CD14-positive monocyte (primary cell): ENCODE measurements at regions of chr5 and their contacts with region 1.

Region 1: GRCh38 chr5:10353241-10354047 is at the start of gene MARCHF6:
- DNase-seq: peak; percentile 84 to 89 (median 88)
- H3K4me3 ChIP-seq: peak within 1 kb of the TSS; percentile 85 to 91 (median 89)
- H3K4me3 Mint-ChIP-seq: peak within 1 kb of the TSS; percentile 100
- H3K27ac ChIP-seq: peak within 1 kb of the TSS; percentile 98
- H3K27ac Mint-ChIP-seq: peak within 1 kb of the TSS; percentile 95 to 100 (median 98)
- H3K4me1 ChIP-seq: peaks cover 25 to 41% of the 10 kb centered on the region in 2 donors
- H3K4me1 Mint-ChIP-seq: peaks cover 33% of the 10 kb centered on the region
- H3K27me3 ChIP-seq: no peaks in the 10 kb centered on the region
- H3K27me3 Mint-ChIP-seq: peaks cover 0 to 3% (median 0%) of the 10 kb centered on the region in 3 donors
- CTCF ChIP-seq: no peak
- polyA plus RNA-seq, gene MARCHF6: 24.0 to 90.1 (median 31.0) TPM

Region 2: DNA sequence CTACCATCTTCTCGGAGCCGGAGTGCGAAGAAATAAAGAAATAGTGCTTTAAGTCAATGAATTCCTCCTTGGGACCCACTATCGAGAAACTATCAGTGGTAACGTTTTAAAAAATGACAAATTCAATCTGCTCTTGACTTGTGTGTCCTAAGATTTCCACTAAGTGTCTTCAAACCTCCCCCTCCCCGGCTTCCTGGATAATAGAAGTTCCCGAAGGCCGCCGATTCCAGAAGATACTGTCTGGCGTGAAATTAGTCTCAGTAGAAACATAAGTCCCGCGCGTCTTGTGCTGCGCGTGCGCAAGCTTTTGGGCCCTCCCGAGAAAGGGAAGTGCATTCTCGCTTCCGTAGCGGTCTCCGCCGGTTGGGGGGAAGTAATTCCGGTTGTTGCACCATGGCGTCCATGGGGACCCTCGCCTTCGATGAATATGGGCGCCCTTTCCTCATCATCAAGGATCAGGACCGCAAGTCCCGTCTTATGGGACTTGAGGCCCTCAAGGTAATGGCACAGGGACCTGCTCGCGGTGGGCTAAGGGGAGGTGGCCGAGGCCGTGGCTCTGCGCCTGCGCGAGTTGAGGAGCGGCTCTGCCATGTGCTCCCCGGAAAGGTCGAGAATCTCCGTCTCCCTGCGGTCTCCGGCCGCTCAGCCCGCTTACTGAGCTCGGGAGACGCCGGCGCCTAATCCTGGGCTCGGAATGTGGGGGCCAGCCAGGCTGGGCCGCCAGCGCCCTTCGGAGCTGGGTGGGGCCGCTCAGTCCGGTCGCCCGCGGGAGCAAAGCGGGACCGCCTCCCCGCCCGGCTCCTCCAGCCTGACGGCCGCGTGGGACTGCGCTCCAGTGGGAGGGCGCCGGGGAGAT is 103.3 kb before region 1 on chr5 and contains the start of gene CCT5:
- intact Hi-C with region 1: loop called in 1 of 2 experiments (anchors 5 kb)
- DNase-seq: peak; percentile 97 to 99 (median 98)
- H3K4me3 ChIP-seq: peak within 1 kb of the TSS; percentile 88 to 92 (median 89)
- H3K4me3 Mint-ChIP-seq: peak within 1 kb of the TSS; percentile 91 to 96
- H3K27ac ChIP-seq: peak within 1 kb of the TSS; percentile 85 to 99
- H3K27ac Mint-ChIP-seq: peak within 1 kb of the TSS; percentile 96 to 100 (median 99)
- H3K4me1 ChIP-seq: peaks cover 24 to 33% of the 10 kb centered on the region in 2 donors
- H3K4me1 Mint-ChIP-seq: peaks cover 29% of the 10 kb centered on the region
- H3K27me3 ChIP-seq: no peaks in the 10 kb centered on the region
- H3K27me3 Mint-ChIP-seq: peaks cover 0 to 5% (median 1%) of the 10 kb centered on the region in 3 donors
- CTCF ChIP-seq: no peak
- polyA plus RNA-seq, gene CCT5: 142 to 236 (median 229) TPM

Region 3: DNA sequence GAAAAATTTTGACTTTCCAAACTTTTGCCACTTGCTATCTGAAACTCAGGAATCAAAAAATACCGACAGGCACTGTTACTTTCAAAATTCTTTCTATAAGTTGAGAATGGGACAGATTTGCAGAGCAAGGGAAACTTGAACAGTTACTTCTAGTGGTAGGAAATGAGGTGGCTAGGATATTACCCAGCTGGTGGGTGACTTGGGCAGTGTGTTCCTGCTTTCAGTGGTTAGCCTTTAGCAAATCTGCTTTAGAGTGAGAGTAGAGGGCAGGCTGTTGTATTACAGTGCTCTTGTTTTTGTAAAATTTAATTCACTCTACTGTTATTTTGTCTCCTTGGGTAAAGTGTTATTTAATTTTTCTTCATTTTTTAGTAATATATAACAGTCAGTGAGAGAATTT is 48.1 kb after region 1 on chr5:
- intact Hi-C with region 1: no loop called
- DNase-seq: no peak
- H3K4me3 ChIP-seq: no peak overlapping the region
- H3K4me3 Mint-ChIP-seq: no peak overlapping the region
- H3K27ac ChIP-seq: peak overlapping the region in 1 of 2 donors; percentile 12
- H3K27ac Mint-ChIP-seq: peak overlapping the region in 3 of 7 donors; percentile 11 to 70 (median 36)
- H3K4me1 ChIP-seq: peaks cover 7 to 12% of the 10 kb centered on the region in 2 donors
- H3K4me1 Mint-ChIP-seq: peaks cover 15% of the 10 kb centered on the region
- H3K27me3 ChIP-seq: no peaks in the 10 kb centered on the region
- H3K27me3 Mint-ChIP-seq: peaks cover 0 to 2% (median 0%) of the 10 kb centered on the region in 3 donors
- CTCF ChIP-seq: no peak

Region 4: DNA sequence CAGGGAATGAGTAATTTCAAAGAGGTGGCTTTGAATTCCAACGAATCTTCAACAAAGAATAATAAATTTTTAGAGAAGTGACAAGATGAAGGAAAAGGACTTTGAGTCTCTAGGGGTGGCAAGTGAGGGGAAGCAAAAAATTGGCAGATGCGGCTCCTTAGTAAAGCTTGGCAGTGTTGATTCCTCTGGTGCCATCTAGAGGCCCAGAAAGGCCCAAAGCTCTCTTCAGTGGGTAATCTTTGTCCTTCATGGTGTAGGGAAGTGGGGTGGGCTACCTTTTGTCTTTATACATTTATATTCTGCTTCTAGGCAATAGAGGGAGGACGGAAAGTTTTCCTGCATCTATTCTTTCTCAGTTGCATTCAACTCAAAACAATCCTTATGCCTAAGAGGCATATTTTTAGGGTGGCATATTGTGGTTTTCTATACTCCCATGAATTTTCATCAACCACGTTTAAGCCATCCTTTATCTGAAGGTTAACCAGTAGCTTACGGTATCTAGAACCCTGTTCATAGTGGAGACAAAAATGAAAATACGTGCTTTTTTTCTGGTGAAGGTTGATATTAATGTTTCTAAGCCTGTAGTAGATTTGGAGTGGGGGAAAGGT is 70.8 kb after region 1 on chr5:
- intact Hi-C with region 1: loop called in 1 of 2 experiments (anchors 2 kb)
- DNase-seq: peak; percentile 34 to 50 (median 46)
- H3K4me3 ChIP-seq: no peak overlapping the region
- H3K4me3 Mint-ChIP-seq: no peak overlapping the region
- H3K27ac ChIP-seq: no peak overlapping the region
- H3K27ac Mint-ChIP-seq: peak overlapping the region in 2 of 7 donors; percentile 46 to 52
- H3K4me1 ChIP-seq: peaks cover 33 to 38% of the 10 kb centered on the region in 2 donors
- H3K4me1 Mint-ChIP-seq: peaks cover 40% of the 10 kb centered on the region
- H3K27me3 ChIP-seq: no peaks in the 10 kb centered on the region
- H3K27me3 Mint-ChIP-seq: no peaks in the 10 kb centered on the region
- CTCF ChIP-seq: peak; percentile 64

Region 5: DNA sequence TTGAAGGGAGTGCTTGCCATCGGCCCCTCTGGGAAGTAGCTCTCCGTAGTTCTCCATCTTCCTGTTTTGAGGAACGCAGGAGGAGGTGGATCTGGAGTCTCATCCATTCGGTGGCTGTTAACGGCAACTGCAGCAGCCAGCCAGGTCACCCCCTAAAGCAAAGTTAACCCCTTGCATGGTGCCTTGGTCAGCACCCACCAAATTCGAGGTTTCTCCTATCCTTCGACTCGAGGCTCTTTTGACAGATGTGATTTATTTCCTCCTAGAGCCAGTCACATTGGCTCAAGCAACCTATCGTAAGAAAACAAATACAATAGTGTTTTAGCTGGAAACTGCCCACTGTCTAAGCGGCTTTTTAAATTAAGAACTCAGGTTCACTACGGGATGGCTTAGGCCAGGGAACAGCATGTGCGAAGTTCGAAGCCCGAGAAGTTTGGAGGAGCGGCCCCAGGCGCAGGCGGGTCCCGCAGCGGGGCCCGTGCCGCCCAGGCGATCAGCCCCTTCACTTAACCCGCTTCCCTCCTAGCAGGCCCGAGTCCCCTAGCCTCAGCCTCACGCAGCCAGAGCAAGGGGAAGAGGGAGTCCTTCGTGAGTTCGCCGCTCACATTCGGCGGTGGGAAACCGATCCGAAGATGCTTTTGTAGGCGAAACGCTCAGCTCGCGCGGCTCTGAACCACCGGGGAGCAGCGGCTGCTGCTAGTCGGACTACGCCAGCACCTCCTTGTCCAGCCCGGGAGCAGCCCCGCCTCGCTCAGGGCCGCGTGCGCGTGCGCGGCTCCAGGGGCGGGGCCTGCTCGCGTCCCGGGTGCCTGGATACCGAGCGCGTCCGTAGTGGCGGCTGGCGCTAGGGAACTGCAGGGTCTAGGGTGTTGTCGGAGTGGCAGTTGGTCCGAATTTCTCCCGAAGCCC is 87.9 kb after region 1 on chr5 and contains the start of gene ROPN1L:
- intact Hi-C with region 1: loop called in 1 of 2 experiments (anchors 5 kb)
- DNase-seq: peak; percentile 76 to 83 (median 79)
- H3K4me3 ChIP-seq: peak within 1 kb of the TSS; percentile 51 to 87 (median 65)
- H3K4me3 Mint-ChIP-seq: peak within 1 kb of the TSS; percentile 88 to 92
- H3K27ac ChIP-seq: peak within 1 kb of the TSS; percentile 29 to 60
- H3K27ac Mint-ChIP-seq: peak within 1 kb of the TSS; percentile 70 to 91 (median 87)
- H3K4me1 ChIP-seq: peaks cover 57 to 74% of the 10 kb centered on the region in 2 donors
- H3K4me1 Mint-ChIP-seq: peaks cover 59% of the 10 kb centered on the region
- H3K27me3 ChIP-seq: no peaks in the 10 kb centered on the region
- H3K27me3 Mint-ChIP-seq: peaks cover 0 to 3% (median 0%) of the 10 kb centered on the region in 3 donors
- CTCF ChIP-seq: no peak
- polyA plus RNA-seq, gene ROPN1L: 1.5 to 2.1 (median 1.9) TPM

Region 6: GRCh38 chr5:10635257-10635866 is 281.9 kb after region 1 on chr5:
- intact Hi-C with region 1: loop called in 1 of 2 experiments (anchors 10 kb)
- DNase-seq: peak; percentile 93 to 97 (median 97)
- H3K4me3 ChIP-seq: peak overlapping the region in 1 of 3 experiments; percentile 38
- H3K4me3 Mint-ChIP-seq: peak overlapping the region; percentile 7 to 57
- H3K27ac ChIP-seq: peak overlapping the region; percentile 38 to 98
- H3K27ac Mint-ChIP-seq: peak overlapping the region; percentile 81 to 99 (median 87)
- H3K4me1 ChIP-seq: peaks cover 54 to 58% of the 10 kb centered on the region in 2 donors
- H3K4me1 Mint-ChIP-seq: peaks cover 57% of the 10 kb centered on the region
- H3K27me3 ChIP-seq: no peaks in the 10 kb centered on the region
- H3K27me3 Mint-ChIP-seq: peaks cover 2 to 12% (median 2%) of the 10 kb centered on the region in 3 donors
- CTCF ChIP-seq: no peak